ENCODE measurements at regions of chr1 and their contacts with region 1.

Region 1: DNA sequence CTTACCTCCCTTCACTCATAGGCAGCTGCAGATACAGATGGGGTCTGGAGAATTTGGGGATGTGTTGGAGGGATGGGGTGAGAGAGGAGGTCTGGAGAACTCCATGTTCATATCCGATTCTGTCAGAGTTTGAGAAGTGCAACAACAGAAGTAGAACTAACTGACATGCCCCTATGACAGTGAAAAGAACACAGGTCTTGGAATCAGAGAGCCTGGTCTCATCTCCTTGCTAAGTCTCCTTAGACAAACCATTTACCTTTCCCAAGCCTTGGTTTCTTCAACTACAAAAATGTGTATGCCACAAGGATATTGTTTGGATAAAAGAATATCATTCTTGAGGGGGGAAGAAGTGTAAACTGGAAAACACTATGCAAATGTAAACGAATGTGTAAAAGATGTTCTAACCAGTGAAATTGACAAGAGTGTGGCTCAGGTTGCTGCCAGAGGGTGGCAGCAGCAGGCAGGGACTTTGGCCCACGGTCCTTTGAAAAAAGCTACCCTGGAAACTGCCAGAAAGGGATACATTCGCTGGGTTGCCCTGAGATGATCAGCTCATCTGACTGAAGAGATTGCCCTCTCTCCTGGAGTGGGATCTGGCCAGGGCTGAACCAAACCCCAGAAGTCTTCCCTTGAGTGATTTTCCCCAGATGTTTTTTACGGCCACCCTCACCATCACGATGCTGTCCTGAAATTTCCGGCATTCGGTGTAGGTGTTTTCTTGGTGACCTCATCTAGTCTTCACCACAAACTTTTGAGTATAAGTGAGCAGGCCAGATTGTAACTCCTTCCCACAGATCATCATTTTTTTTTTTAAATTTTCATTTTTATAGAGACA is 17.0 kb upstream of the CD2 start:
- DNase-seq: peak; percentile 10
- ATAC-seq: peak; percentile 87
- H3K4me3 ChIP-seq: no peak overlapping the region
- H3K27ac ChIP-seq: no peak overlapping the region
- H3K4me1 ChIP-seq: no peaks in the 10 kb centered on the region
- H3K27me3 ChIP-seq: no peaks in the 10 kb centered on the region
- CTCF ChIP-seq: peak; percentile 80 to 83 (median 82); a peak in 5 of 6 replicates
- POLR2A ChIP-seq: no peak
- RAD21 ChIP-seq: peak; percentile 86

Region 2: DNA sequence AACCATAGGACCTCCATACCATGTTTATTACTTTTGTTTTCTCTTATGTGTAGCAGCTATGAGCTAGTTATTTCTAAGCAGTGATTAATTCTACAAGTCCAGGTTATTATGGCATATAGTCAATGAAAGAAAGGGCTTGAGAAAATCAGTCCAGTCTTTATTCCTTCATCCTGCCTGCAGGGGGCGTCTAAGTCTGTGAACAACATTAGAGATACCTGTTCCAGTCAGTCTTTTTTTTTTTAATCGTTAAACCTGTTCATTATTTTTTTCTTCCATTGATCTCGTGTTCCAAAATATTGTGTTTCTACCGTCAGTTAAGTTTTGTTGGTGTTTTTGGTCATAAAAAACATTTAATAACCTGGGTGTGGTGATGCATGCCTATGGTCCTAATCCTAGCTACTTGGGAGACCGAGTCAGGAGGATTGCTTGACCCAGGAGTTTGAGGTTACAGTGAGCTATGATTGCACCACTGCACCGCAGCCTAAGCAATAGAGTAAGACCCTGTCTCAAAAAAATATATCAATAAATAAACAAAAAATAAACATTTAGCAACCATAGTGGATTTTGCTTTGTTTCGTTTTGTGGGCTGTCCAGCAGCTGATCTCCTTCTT is 12.4 kb before region 1 on chr1:
- CTCF ChIA-PET with region 1: interaction called, 28 read pairs
- POLR2A ChIA-PET with region 1: no interaction called
- RAD21 ChIA-PET with region 1: no interaction called
- intact Hi-C with region 1: no loop called
- DNase-seq: peak; percentile 38
- ATAC-seq: peak; percentile 83
- H3K4me3 ChIP-seq: no peak overlapping the region
- H3K27ac ChIP-seq: no peak overlapping the region
- H3K4me1 ChIP-seq: no peaks in the 10 kb centered on the region
- H3K27me3 ChIP-seq: 0 out of 2 replicates have a peak, but pooled peaks cover 3% of the 10 kb centered on the region
- CTCF ChIP-seq: peak; percentile 50 to 89 (median 68); a peak in 5 of 6 replicates
- POLR2A ChIP-seq: no peak
- RAD21 ChIP-seq: peak; percentile 63

Region 3: GRCh38 chr1:116817582-116818064 is 80.4 kb after region 1 on chr1:
- CTCF ChIA-PET with region 1: interaction called, 12 read pairs
- POLR2A ChIA-PET with region 1: no interaction called
- RAD21 ChIA-PET with region 1: no interaction called
- intact Hi-C with region 1: loop called (anchors 1 kb)
- DNase-seq: peak; percentile 75
- ATAC-seq: peak; percentile 100
- H3K4me3 ChIP-seq: no peak overlapping the region
- H3K27ac ChIP-seq: no peak overlapping the region
- H3K4me1 ChIP-seq: no peaks in the 10 kb centered on the region
- H3K27me3 ChIP-seq: no peaks in the 10 kb centered on the region
- CTCF ChIP-seq: peak; percentile 77 to 98 (median 85)
- POLR2A ChIP-seq: no peak
- RAD21 ChIP-seq: peak; percentile 80

Region 4: GRCh38 chr1:116881879-116882520 is 144.8 kb after region 1 on chr1:
- CTCF ChIA-PET with region 1: interaction called, 3 read pairs
- POLR2A ChIA-PET with region 1: no interaction called
- RAD21 ChIA-PET with region 1: interaction called in 1 of 2 experiments, 3 read pairs
- intact Hi-C with region 1: loop called (anchors 5 kb)
- DNase-seq: no peak
- ATAC-seq: peak; percentile 59
- H3K4me3 ChIP-seq: no peak overlapping the region
- H3K27ac ChIP-seq: no peak overlapping the region
- H3K4me1 ChIP-seq: peaks cover 19 to 23% of the 10 kb centered on the region in 2 experiments
- H3K27me3 ChIP-seq: no peaks in the 10 kb centered on the region
- CTCF ChIP-seq: peak; percentile 35 to 47 (median 41); a peak in 5 of 6 replicates
- POLR2A ChIP-seq: no peak
- RAD21 ChIP-seq: peak; percentile 51; the same call in 1 of the 2 replicates

Region 5: DNA sequence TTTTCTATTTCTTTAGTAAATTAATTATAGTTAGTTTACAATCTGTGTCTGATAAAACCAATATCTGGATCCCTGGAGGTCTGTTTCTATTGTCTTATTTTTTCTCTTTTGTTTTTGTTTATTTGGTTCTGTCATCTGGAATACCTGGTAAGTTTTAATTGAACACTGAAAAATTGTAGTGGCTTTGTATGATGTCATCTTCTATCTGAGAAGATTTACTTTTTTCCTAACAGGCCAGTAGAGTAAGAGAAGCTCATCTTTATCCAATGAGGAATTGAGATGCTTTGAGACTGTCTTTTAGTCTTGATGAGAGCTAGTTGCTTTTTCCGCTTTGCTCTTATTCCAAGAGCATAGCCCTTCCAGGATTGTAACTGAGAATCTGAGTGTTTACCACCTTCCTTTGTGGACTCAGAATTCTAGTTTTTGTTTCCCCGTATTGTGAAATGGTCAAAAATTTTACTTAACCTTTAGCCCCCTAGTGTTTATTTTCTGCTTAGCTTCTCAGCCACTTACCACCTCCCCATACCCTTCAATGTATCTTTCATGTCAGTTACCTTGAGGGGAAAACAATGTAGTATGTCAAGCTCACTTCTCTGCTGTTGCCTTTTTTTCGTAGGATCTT is 197.5 kb after region 1 on chr1:
- CTCF ChIA-PET with region 1: interaction called, 7 read pairs
- POLR2A ChIA-PET with region 1: no interaction called
- RAD21 ChIA-PET with region 1: no interaction called
- intact Hi-C with region 1: loop called (anchors 10 kb)
- DNase-seq: no peak
- ATAC-seq: peak; percentile 55; the same call in 1 of the 2 replicates
- H3K4me3 ChIP-seq: no peak overlapping the region
- H3K27ac ChIP-seq: no peak overlapping the region
- H3K4me1 ChIP-seq: no peaks in the 10 kb centered on the region
- H3K27me3 ChIP-seq: no peaks in the 10 kb centered on the region
- CTCF ChIP-seq: peak in 2 of 3 experiments; percentile 33 to 52; a peak in 2 of 6 replicates
- POLR2A ChIP-seq: no peak
- RAD21 ChIP-seq: peak; percentile 17; the same call in 1 of the 2 replicates

Region 6: GRCh38 chr1:116982319-116983004 is 245.2 kb after region 1 on chr1:
- CTCF ChIA-PET with region 1: no interaction called
- POLR2A ChIA-PET with region 1: no interaction called
- RAD21 ChIA-PET with region 1: no interaction called
- intact Hi-C with region 1: no loop called
- DNase-seq: no peak
- ATAC-seq: 0 out of 2 replicates have a peak, but pooled peaks have one; percentile 36
- H3K4me3 ChIP-seq: no peak overlapping the region
- H3K27ac ChIP-seq: no peak overlapping the region
- H3K4me1 ChIP-seq: no peaks in the 10 kb centered on the region
- H3K27me3 ChIP-seq: no peaks in the 10 kb centered on the region
- CTCF ChIP-seq: no peak
- POLR2A ChIP-seq: no peak
- RAD21 ChIP-seq: no peak

Region 7: GRCh38 chr1:117534995-117535467 is 797.8 kb after region 1 on chr1:
- CTCF ChIA-PET with region 1: no interaction called
- POLR2A ChIA-PET with region 1: no interaction called
- RAD21 ChIA-PET with region 1: no interaction called
- intact Hi-C with region 1: no loop called
- DNase-seq: peak; percentile 35
- ATAC-seq: peak; percentile 94
- H3K4me3 ChIP-seq: no peak overlapping the region
- H3K27ac ChIP-seq: no peak overlapping the region
- H3K4me1 ChIP-seq: peaks cover 2 to 8% of the 10 kb centered on the region in 2 experiments; a peak in 1 of 4 replicates
- H3K27me3 ChIP-seq: no peaks in the 10 kb centered on the region
- CTCF ChIP-seq: peak; percentile 27 to 78 (median 67); a peak in 5 of 6 replicates
- POLR2A ChIP-seq: no peak
- RAD21 ChIP-seq: peak; percentile 52